ENCODE measurements at regions of chr13 and their contacts with region 1.

Region 1: DNA sequence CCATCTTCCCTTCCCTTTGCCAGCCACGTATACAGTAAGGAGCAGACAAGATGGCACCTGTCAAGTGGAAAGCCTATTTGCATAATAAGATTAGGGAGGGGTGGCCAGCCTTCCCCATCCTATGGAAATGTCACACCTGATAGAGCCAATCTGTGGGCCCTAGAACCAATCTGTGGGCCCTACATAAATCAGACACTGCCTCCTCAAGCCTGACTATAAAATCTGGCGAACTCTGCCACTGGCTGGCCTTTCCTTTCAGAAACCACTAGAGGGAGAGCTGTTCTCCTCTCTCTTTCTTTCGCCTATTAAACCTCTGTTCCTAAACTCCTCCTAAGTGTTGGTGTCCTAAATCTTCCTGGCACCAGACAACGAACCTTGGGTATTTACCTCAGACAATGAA is 231.5 kb upstream of the KLHL1 start:
- DNase-seq: peak in 1 of 2 experiments; percentile 2
- H3K4me3 ChIP-seq: no peak overlapping the region
- H3K27ac ChIP-seq: no peak overlapping the region
- H3K4me1 ChIP-seq: no peaks in the 10 kb centered on the region
- H3K27me3 ChIP-seq: no peaks in the 10 kb centered on the region
- CTCF ChIP-seq: peak; percentile 61

Region 2: GRCh38 chr13:70415136-70415535 is 75.4 kb after region 1 on chr13:
- CTCF ChIA-PET with region 1: no interaction called
- POLR2A ChIA-PET with region 1: no interaction called
- intact Hi-C with region 1: no loop called
- DNase-seq: no peak
- H3K4me3 ChIP-seq: no peak overlapping the region
- H3K27ac ChIP-seq: no peak overlapping the region
- H3K4me1 ChIP-seq: no peaks in the 10 kb centered on the region
- H3K27me3 ChIP-seq: no peaks in the 10 kb centered on the region
- CTCF ChIP-seq: no peak

Region 3: GRCh38 chr13:70568571-70568970 is 228.8 kb after region 1 on chr13:
- CTCF ChIA-PET with region 1: no interaction called
- POLR2A ChIA-PET with region 1: no interaction called
- intact Hi-C with region 1: loop called (anchors 10 kb)
- DNase-seq: no peak
- H3K4me3 ChIP-seq: no peak overlapping the region
- H3K27ac ChIP-seq: no peak overlapping the region
- H3K4me1 ChIP-seq: no peaks in the 10 kb centered on the region
- H3K27me3 ChIP-seq: no peaks in the 10 kb centered on the region
- CTCF ChIP-seq: peak; percentile 80

Measured in PC-9 (cell line).